PC-9 (cell line): ENCODE measurements at regions of chr9 and their contacts with region 1.

Region 1: DNA sequence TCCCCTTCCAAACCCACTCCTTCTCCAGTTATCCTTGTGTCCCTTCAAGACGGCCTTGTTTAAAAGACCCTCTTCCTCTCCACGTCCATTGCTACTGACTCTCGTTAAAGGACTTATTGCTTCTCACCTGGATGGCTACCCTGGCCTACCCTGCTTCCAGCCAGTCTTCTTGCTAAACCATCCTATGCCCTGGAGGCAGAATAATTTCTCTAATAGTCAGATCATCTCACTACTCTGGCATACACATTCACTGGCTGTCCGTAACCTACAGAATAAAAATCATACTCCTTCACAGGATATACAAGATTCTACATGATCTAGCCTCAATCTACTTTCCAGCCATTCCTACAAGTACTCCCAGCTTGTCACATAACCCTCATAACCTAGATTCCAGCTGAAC is 92.6 kb downstream of the TRPM6 start:
- DNase-seq: no peak
- H3K4me3 ChIP-seq: no peak overlapping the region
- H3K27ac ChIP-seq: no peak overlapping the region
- H3K4me1 ChIP-seq: no peaks in the 10 kb centered on the region
- H3K27me3 ChIP-seq: no peaks in the 10 kb centered on the region
- CTCF ChIP-seq: no peak

Region 2: GRCh38 chr9:74908665-74909064 is 113.6 kb after region 1 on chr9:
- CTCF ChIA-PET with region 1: interaction called, 11 read pairs
- POLR2A ChIA-PET with region 1: no interaction called
- intact Hi-C with region 1: no loop called
- DNase-seq: no peak
- H3K4me3 ChIP-seq: no peak overlapping the region
- H3K27ac ChIP-seq: no peak overlapping the region
- H3K4me1 ChIP-seq: no peaks in the 10 kb centered on the region
- H3K27me3 ChIP-seq: no peaks in the 10 kb centered on the region
- CTCF ChIP-seq: no peak